Panc1 (cell line): ENCODE measurements at regions of chr6 and their contacts with region 1.

Region 1: GRCh38 chr6:168091171-168091979 is 12.4 kb upstream of the FRMD1 start:
- DNase-seq: no peak
- ATAC-seq: no peak
- H3K4me3 ChIP-seq: no peak overlapping the region
- H3K27ac ChIP-seq: no peak overlapping the region
- H3K4me1 ChIP-seq: peaks cover 18% of the 10 kb centered on the region
- H3K27me3 ChIP-seq: no peaks in the 10 kb centered on the region
- CTCF ChIP-seq: no peak

Region 2: GRCh38 chr6:168180548-168181011 is 89.2 kb after region 1 on chr6:
- CTCF ChIA-PET with region 1: no interaction called
- POLR2A ChIA-PET with region 1: no interaction called
- in situ Hi-C with region 1: no loop called
- intact Hi-C with region 1: no loop called
- DNase-seq: no peak
- ATAC-seq: no peak; the same call in 1 of the 2 replicates
- H3K4me3 ChIP-seq: no peak overlapping the region
- H3K27ac ChIP-seq: no peak overlapping the region
- H3K4me1 ChIP-seq: no peaks in the 10 kb centered on the region
- H3K27me3 ChIP-seq: no peaks in the 10 kb centered on the region
- CTCF ChIP-seq: no peak

Region 3: GRCh38 chr6:168194028-168194721 is 102.8 kb after region 1 on chr6:
- CTCF ChIA-PET with region 1: no interaction called
- POLR2A ChIA-PET with region 1: no interaction called
- in situ Hi-C with region 1: no loop called
- intact Hi-C with region 1: no loop called
- DNase-seq: no peak
- ATAC-seq: no peak
- H3K4me3 ChIP-seq: no peak overlapping the region
- H3K27ac ChIP-seq: no peak overlapping the region
- H3K4me1 ChIP-seq: peaks cover 12% of the 10 kb centered on the region
- H3K27me3 ChIP-seq: no peaks in the 10 kb centered on the region; the same call in 1 of the 2 replicates
- CTCF ChIP-seq: no peak

Region 4: DNA sequence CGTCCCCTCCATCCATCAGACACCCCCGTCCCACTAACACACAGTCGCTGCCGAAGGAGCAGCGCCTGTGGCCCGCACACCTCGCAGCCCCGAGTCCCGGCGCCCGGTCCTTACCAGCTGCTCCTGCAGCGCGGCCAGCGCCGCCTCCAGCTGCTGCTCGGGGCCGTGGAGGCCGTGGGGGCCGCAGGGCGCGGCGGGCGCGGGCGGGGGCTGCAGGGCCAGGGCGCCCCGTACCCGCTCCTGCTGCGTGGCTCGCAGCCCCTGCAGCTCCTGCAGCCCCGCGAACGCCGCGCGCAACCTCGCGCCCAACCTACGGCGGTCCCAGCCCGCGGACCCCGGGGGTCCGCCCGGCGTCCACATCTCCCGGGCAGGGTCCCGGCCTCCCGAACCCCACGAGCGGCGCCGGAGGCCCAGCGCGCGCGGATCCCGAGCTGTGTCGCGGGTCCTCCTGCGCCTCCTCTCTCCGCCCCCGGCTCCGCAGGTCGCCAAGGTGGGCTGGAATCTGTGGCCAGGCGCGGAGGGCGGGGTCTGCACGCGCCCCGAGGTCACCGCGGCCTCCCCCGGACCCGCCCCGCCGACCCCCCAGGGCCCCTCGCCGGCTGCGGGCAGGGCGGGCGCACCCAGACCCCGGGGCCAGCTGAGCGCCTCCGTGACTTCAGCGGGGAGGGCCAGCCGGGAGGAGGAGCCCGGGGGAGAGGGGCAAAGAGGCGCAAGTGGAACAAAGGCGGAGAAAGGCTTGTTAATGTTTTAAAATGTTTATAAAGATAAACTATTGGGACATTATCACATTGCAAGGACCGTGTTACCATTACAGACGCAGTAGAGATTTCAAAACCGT is 228.1 kb after region 1 on chr6 and contains the start of gene DACT2:
- CTCF ChIA-PET with region 1: interaction called, 12 read pairs
- POLR2A ChIA-PET with region 1: no interaction called
- in situ Hi-C with region 1: no loop called
- intact Hi-C with region 1: no loop called
- DNase-seq: no peak
- ATAC-seq: peak; percentile 77
- H3K4me3 ChIP-seq: peak within 1 kb of the TSS; percentile 37 to 52
- H3K27ac ChIP-seq: no peak within 1 kb of the TSS
- H3K4me1 ChIP-seq: 0 out of 2 replicates have a peak, but pooled peaks cover 5% of the 10 kb centered on the region
- H3K27me3 ChIP-seq: peaks cover 8% of the 10 kb centered on the region
- CTCF ChIP-seq: no peak
- total RNA-seq, gene DACT2: 3.3 TPM